Gastrocnemius medialis (tissue), 4 donors: ENCODE measurements at regions of chr3 and their contacts with region 1.

Region 1: DNA sequence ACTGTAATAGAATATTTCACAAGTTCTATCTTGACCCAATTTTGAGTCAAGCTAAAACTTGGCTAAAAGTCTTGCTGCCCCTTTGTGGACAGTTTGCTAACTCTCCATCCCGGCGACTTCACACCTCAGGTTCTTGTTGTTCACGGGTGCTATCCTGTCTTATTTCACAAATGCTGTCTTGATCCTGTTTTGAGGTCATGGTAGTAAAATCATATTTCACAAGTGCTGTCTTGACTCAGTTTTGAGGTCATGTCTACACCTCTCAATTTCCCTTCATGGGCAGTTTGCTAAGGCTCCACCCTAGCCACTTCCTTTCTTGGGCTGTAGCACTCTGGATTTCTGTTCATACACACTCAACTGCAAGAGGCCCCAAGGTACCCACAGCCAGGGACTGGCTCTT is 45.0 kb upstream of the GK5 start:
- DNase-seq: no peak
- ATAC-seq: no peak
- H3K4me3 ChIP-seq: no peak overlapping the region
- H3K27ac ChIP-seq: no peak overlapping the region
- H3K4me1 ChIP-seq: no peaks in the 10 kb centered on the region
- H3K27me3 ChIP-seq: no peaks in the 10 kb centered on the region
- CTCF ChIP-seq: no peak
- POLR2A ChIP-seq: no peak

Region 2: GRCh38 chr3:141094790-141095545 is 1175.4 kb before region 1 on chr3:
- in situ Hi-C with region 1: no loop called
- intact Hi-C with region 1: no loop called
- DNase-seq: peak; percentile 47 to 72
- ATAC-seq: peak; percentile 81 to 82
- H3K4me3 ChIP-seq: peak overlapping the region; percentile 35 to 46 (median 42)
- H3K27ac ChIP-seq: peak overlapping the region in 3 of 4 donors; percentile 54 to 70 (median 65)
- H3K4me1 ChIP-seq: peaks cover 18 to 45% of the 10 kb centered on the region in 2 donors
- H3K27me3 ChIP-seq: no peaks in the 10 kb centered on the region
- CTCF ChIP-seq: no peak
- POLR2A ChIP-seq: no peak

Region 3: DNA sequence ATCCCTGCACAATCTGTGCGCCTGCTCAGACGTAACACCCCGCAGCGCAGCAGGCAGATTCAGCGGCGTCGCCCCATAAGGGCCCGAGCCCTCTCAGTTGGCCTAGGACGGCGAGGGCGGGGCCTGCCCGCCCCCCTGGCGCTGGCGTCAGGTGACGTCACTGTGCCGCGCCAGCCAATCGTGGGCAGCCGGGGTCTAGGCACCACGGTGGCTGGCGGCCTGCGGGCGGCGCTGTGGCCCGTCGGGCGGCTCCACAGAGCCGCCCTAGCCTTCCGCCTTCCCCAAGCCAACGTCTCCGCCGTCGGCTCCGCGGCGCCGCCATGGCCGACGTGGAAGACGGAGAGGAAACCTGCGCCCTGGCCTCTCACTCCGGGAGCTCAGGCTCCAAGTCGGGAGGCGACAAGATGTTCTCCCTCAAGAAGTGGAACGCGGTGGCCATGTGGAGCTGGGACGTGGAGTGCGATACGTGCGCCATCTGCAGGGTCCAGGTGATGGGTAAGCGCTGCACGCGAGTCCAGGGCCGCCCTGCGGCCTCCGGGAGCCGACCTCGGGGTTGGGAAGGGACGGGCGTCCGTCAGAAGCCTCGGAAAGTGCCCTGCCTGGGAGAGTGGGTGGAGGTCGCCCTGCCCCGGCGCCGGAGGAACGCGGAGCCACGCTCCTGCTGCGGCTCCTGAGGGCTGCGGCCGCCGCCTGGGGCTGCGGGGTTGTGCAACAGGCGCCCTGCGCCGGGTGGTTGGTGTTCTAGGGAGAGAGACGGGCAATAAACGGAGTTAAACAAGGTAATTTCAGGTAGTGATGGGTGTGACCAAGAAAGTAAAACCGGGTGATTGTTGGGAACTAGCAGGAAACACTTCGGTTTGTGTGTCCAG is 532.2 kb before region 1 on chr3 and contains the start of gene RNF7:
- in situ Hi-C with region 1: no loop called
- intact Hi-C with region 1: no loop called
- DNase-seq: peak; percentile 84 to 94
- ATAC-seq: peak; percentile 90 to 93
- H3K4me3 ChIP-seq: peak within 1 kb of the TSS; percentile 87 to 97 (median 92)
- H3K27ac ChIP-seq: peak within 1 kb of the TSS; percentile 90 to 96 (median 92)
- H3K4me1 ChIP-seq: peaks cover 36 to 37% of the 10 kb centered on the region in 2 donors
- H3K27me3 ChIP-seq: no peaks in the 10 kb centered on the region
- CTCF ChIP-seq: peak; percentile 80 to 96 (median 95)
- POLR2A ChIP-seq: peak; percentile 78 to 79
- total RNA-seq, gene RNF7: 92.1 to 113 (median 106) TPM

Region 4: GRCh38 chr3:142129516-142130171 is 140.8 kb before region 1 on chr3:
- in situ Hi-C with region 1: loop called in 1 of 4 experiments (anchors 5 kb)
- intact Hi-C with region 1: no loop called
- DNase-seq: no peak
- ATAC-seq: no peak
- H3K4me3 ChIP-seq: no peak overlapping the region
- H3K27ac ChIP-seq: no peak overlapping the region
- H3K4me1 ChIP-seq: no peaks in the 10 kb centered on the region
- H3K27me3 ChIP-seq: no peaks in the 10 kb centered on the region
- CTCF ChIP-seq: no peak
- POLR2A ChIP-seq: no peak

Region 5: GRCh38 chr3:142394921-142395622 is 124.7 kb after region 1 on chr3:
- in situ Hi-C with region 1: no loop called
- intact Hi-C with region 1: no loop called
- DNase-seq: no peak
- ATAC-seq: no peak
- H3K4me3 ChIP-seq: no peak overlapping the region
- H3K27ac ChIP-seq: no peak overlapping the region
- H3K4me1 ChIP-seq: no peaks in the 10 kb centered on the region
- H3K27me3 ChIP-seq: no peaks in the 10 kb centered on the region
- CTCF ChIP-seq: no peak
- POLR2A ChIP-seq: no peak